Common myeloid progenitor, CD34-positive (primary cell): ENCODE measurements at regions of chr22 and their contacts with region 1.

Region 1: DNA sequence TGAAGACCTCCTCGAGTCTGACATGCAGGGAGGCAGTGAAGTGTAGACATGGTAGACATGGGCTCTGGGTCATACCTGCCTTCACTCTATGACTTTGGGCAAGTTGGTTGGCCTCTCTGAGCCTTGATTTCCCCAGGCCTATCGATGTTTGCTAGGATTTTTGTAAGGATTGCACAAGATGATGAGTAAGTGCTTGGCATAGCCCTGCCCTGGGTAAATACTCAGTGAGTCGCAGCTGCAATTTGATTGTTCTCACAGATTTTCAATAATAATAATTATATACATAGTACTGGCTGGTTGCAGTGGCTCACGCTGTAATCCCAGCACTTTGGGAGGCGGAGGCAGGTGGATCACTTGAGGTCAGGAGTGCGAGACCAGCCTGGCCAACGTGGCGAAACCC is 18.1 kb downstream of the MCM5 start:
- DNase-seq: no peak
- H3K4me3 ChIP-seq: no peak overlapping the region
- H3K27ac ChIP-seq: no peak overlapping the region
- H3K4me1 ChIP-seq: no peaks in the 10 kb centered on the region
- H3K27me3 ChIP-seq: no peaks in the 10 kb centered on the region

Region 2: GRCh38 chr22:35430897-35431322 is 12.8 kb after region 1 on chr22:
- CTCF ChIA-PET with region 1: interaction called, 13 read pairs
- POLR2A ChIA-PET with region 1: no interaction called
- DNase-seq: peak; percentile 50 to 72 (median 64)
- H3K4me3 ChIP-seq: no peak overlapping the region
- H3K27ac ChIP-seq: no peak overlapping the region
- H3K4me1 ChIP-seq: no peaks in the 10 kb centered on the region
- H3K27me3 ChIP-seq: no peaks in the 10 kb centered on the region

Region 3: GRCh38 chr22:36052505-36053270 is 634.6 kb after region 1 on chr22:
- CTCF ChIA-PET with region 1: no interaction called
- POLR2A ChIA-PET with region 1: no interaction called
- DNase-seq: peak in 2 of 3 donors; percentile 53 to 73
- H3K4me3 ChIP-seq: peak overlapping the region in 1 of 7 experiments; percentile 7
- H3K27ac ChIP-seq: peak overlapping the region in 1 of 2 experiments; percentile 50
- H3K4me1 ChIP-seq: peaks cover 3 to 9% (median 6%) of the 10 kb centered on the region in 4 experiments
- H3K27me3 ChIP-seq: no peaks in the 10 kb centered on the region